ENCODE measurements at regions of chr4 and their contacts with region 1.

Region 1: DNA sequence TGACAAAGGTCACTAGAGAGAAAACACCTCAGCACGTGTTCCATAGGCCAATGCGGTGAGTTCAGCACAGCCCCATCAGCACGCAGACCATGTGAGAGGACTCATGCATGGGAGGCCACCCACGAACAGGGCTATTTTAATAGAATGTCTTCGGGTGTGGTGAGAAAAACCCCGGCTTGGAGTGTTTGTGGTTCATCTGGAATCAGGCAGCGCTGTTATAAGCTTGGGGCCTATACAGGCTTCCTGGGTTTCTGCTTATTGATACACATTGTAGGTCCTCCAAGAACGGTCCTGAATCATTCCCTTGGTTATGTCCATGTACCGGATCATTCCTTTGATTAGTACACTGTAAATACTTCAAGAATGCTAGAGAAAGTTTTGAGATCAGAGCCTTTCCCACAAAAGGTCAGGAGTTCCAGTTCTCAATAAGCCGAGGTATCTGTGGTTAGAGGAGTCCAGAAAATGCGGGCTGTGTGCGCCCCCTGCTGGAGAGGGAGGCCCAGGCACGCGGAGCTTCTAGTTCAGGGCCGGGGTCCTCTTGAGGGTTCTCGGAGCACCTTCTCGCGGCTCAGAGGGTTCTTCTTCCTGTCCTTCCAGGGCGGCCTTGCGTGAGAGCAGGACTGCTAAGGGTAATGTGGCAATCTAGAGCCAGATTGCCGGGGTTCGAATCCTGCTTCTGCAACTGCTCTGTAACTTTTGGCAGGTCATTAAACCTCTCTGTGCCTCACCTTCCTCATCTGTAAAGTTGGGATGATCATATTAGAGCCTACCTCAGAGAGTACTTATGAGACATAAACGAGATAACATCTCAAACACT is 51.8 kb downstream of the TLR10 start:
- DNase-seq: peak; percentile 74 to 87
- H3K4me3 ChIP-seq: no peak overlapping the region
- H3K27ac ChIP-seq: peak overlapping the region; percentile 13; the same call in 1 of the 2 replicates
- H3K4me1 ChIP-seq: peaks cover 35% of the 10 kb centered on the region
- H3K27me3 ChIP-seq: no peaks in the 10 kb centered on the region
- CTCF ChIP-seq: peak; percentile 94

Region 2: GRCh38 chr4:37802068-37802666 is 928.9 kb before region 1 on chr4:
- CTCF ChIA-PET with region 1: no interaction called
- POLR2A ChIA-PET with region 1: no interaction called
- intact Hi-C with region 1: loop called (anchors 2 kb)
- DNase-seq: peak; percentile 63 to 75
- H3K4me3 ChIP-seq: no peak overlapping the region
- H3K27ac ChIP-seq: no peak overlapping the region
- H3K4me1 ChIP-seq: peaks cover 6% of the 10 kb centered on the region; the same call in 1 of the 2 replicates
- H3K27me3 ChIP-seq: no peaks in the 10 kb centered on the region
- CTCF ChIP-seq: peak; percentile 65

Region 3: DNA sequence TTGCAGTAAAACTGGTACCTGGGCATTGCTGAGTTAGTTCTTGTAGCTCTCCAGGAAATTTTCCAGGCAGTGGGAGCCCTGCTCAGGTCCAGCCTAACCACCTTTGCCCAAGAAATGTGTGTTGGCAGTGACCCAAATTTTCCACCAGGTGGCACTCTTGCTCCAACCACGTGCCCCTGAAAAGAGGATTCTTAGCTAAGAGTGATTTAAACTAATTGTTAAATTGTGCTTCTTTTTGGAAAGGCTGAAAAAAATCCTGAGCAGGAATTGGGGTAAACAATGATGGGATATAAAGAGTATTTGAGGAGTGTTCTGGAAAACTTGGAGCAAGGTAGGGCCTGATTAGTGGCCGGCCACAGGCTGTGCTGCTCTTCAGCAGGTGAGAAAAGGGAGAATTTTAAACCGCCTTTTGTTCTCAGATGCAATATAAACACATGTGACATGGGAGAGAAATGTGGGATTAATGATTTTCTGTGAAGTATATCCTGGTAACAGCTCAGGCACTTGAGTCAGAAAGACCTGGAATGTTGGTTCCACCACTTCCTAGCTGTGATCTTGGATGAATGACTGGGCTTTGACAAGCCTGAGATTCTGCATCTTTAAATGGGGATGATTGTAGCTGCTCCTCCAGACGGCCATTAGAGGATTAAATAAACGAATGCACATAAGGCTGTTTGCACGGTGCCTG is 551.2 kb before region 1 on chr4:
- CTCF ChIA-PET with region 1: interaction called, 5 read pairs
- POLR2A ChIA-PET with region 1: interaction called, 4 read pairs
- intact Hi-C with region 1: loop called (anchors 1 kb)
- DNase-seq: peak; percentile 82
- H3K4me3 ChIP-seq: no peak overlapping the region
- H3K27ac ChIP-seq: peak overlapping the region; percentile 86
- H3K4me1 ChIP-seq: peaks cover 30% of the 10 kb centered on the region
- H3K27me3 ChIP-seq: no peaks in the 10 kb centered on the region
- CTCF ChIP-seq: peak; percentile 98

Region 4: DNA sequence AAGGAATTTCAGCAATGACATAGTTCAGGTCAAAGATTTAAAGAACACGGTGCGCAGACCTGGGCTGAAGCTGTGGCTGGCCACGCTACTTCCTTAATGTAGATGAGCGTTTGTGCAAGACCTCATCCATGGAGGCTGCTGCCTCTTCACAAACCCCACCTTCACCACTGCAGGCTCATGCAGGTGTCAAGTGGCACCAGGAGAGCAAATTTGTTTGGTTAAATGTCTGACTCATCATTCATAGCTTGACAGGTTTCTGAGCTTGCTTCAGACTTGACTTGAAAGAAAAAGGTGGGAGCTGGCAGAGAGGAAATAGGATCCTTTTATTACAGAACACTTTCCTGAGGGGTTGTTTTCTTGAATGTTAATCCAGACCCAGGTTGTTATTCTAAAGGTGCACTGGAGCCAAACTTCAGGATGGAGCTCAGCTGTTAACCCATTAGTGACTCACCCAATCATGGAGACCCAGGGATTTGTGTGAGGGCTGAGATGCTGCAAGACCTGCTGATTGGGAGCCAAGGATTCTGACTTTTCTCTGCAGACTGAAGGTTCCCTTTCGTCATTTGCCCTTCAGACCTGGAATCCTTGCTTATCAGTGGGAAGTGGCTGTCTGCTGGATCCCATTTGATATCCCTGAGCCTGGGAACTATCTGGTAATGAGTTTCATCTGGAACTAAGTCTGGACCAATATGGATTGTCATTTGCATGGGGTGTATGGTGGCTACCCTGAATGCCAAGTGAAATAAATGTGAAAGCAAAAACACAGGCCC is 455.5 kb before region 1 on chr4:
- CTCF ChIA-PET with region 1: no interaction called
- POLR2A ChIA-PET with region 1: no interaction called
- intact Hi-C with region 1: loop called (anchors 2 kb)
- DNase-seq: peak; percentile 80 to 99
- H3K4me3 ChIP-seq: no peak overlapping the region
- H3K27ac ChIP-seq: peak overlapping the region; percentile 79
- H3K4me1 ChIP-seq: peaks cover 33% of the 10 kb centered on the region
- H3K27me3 ChIP-seq: no peaks in the 10 kb centered on the region
- CTCF ChIP-seq: no peak

Measured in PC-9 (cell line).